Activated CD4-positive, alpha-beta memory T cell treated with anti-CD3 and anti-CD28 coated beads, Interleukin-2, amount 10 ng/mL, durations not matched to agents 7 days and 5 days (primary cell): ENCODE measurements at regions of chr3 and their contacts with region 1.

Region 1: DNA sequence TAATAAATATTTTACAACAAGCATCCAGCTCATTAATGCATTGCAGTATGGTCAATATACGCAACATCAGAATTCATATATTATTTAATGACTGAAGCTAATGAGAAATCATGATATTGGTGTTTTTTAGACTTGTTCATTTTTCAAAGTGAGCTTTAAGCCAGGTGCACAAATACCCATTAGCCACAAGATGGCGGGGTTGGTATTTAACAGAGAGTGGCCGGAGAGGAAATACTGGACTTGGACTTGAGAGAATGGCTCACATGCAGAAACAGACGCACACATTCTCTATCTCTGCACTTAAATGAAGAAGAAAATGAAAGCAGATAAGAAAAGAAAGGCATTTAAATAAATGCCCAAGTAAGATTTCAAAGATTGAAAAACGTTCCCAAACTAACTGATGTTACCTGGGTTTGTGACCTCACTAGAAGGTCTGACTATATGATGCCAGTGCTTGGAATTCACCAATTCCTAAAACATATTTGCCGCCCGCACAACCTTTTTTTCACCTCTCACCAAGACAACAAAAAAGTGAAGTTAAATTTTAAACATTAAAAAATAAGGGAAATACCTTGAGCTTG is 21.2 kb upstream of the CRBN start:
- DNase-seq: peak; percentile 26
- H3K4me3 Mint-ChIP-seq: no peak overlapping the region
- H3K27ac Mint-ChIP-seq: no peak overlapping the region
- H3K4me1 Mint-ChIP-seq: peaks cover 14% of the 10 kb centered on the region
- H3K27me3 Mint-ChIP-seq: peaks cover 5% of the 10 kb centered on the region

Region 2: DNA sequence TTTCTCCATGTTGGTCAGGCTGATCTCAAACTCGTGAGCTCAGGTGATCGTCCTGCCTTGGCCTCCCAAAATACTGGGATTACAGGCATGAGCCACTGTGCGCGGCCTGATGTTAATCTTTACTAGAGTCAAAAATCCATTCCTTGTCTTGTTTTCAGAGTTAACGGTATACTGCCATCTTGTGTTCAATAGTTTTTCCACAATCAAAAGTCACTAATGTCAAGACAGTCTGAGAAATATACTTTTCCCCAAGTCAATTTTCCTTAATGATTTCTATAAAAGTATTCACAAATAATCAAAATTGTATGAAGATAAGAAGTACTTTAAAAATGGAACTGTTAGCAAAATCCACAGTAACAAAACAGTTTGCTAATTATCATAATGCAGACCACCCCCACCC is 29.7 kb before region 1 on chr3:
- CTCF ChIA-PET with region 1: interaction called, 13 read pairs
- POLR2A ChIA-PET with region 1: no interaction called
- DNase-seq: no peak
- H3K4me3 Mint-ChIP-seq: no peak overlapping the region
- H3K27ac Mint-ChIP-seq: peak overlapping the region; percentile 45
- H3K4me1 Mint-ChIP-seq: peaks cover 55% of the 10 kb centered on the region
- H3K27me3 Mint-ChIP-seq: no peaks in the 10 kb centered on the region

Region 3: GRCh38 chr3:3232251-3232650 is 31.5 kb after region 1 on chr3:
- CTCF ChIA-PET with region 1: no interaction called
- POLR2A ChIA-PET with region 1: no interaction called
- DNase-seq: no peak
- H3K4me3 Mint-ChIP-seq: no peak overlapping the region
- H3K27ac Mint-ChIP-seq: no peak overlapping the region
- H3K4me1 Mint-ChIP-seq: no peaks in the 10 kb centered on the region
- H3K27me3 Mint-ChIP-seq: no peaks in the 10 kb centered on the region

Region 4: DNA sequence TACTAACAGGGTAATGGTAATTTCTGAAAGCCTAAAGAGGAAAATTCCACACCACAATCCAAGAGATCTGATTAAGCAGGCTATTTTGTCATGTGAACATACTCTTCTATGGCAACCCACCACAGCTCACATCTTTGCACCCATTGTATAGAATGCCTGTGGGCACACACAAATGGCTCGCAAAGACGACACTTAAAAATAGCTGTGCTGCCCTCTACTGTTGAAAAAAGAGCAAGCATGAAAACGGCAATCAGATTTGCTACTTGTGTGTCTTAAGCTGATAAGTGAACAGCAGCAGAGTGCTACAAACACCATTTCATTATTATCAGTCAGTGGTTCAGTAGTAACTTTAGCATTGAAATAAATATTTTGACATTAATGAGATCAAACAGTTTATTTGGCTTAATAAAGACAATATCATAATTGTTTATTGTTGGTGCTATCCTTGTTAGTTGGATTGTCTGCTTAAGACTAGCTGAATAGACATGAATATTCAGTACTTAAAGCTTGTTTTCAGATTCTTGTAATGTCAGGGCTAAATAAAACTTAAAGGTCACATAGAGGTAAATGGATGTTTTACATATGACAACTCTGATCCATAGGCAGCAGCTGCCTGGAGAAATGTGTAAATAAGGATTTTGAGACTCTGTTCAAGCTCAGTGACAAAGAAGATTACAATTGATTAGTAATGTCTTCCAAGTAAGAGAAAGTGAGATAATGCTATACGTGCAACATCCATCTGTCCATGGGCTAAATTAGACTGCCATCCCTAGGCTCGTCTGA is 797.6 kb after region 1 on chr3:
- CTCF ChIA-PET with region 1: interaction called, 32 read pairs
- POLR2A ChIA-PET with region 1: no interaction called
- DNase-seq: peak; percentile 23
- H3K4me3 Mint-ChIP-seq: no peak overlapping the region
- H3K27ac Mint-ChIP-seq: no peak overlapping the region
- H3K4me1 Mint-ChIP-seq: no peaks in the 10 kb centered on the region
- H3K27me3 Mint-ChIP-seq: peaks cover 3% of the 10 kb centered on the region

Region 5: DNA sequence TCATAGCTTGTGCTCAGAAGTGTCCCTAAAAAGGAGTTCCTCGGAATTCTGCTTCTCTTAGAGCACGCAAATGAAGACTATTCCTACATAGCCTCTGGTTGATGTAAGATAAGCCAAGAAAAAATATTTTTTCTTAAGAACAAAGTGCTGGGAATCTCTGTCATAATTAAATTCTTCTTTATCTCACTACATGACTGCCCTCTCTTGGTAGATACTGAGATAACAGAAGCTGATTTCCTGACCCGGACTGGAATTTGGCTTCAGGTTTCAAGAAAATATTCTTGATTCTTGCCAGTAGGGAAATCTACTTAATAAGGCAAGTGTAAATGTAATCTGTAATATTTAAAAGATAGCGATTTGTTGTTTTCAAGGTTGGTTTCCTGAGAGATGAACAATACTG is 1071.1 kb after region 1 on chr3:
- CTCF ChIA-PET with region 1: interaction called, 10 read pairs
- POLR2A ChIA-PET with region 1: no interaction called
- DNase-seq: no peak
- H3K4me3 Mint-ChIP-seq: no peak overlapping the region
- H3K27ac Mint-ChIP-seq: no peak overlapping the region
- H3K4me1 Mint-ChIP-seq: peaks cover 3% of the 10 kb centered on the region
- H3K27me3 Mint-ChIP-seq: no peaks in the 10 kb centered on the region

Region 6: DNA sequence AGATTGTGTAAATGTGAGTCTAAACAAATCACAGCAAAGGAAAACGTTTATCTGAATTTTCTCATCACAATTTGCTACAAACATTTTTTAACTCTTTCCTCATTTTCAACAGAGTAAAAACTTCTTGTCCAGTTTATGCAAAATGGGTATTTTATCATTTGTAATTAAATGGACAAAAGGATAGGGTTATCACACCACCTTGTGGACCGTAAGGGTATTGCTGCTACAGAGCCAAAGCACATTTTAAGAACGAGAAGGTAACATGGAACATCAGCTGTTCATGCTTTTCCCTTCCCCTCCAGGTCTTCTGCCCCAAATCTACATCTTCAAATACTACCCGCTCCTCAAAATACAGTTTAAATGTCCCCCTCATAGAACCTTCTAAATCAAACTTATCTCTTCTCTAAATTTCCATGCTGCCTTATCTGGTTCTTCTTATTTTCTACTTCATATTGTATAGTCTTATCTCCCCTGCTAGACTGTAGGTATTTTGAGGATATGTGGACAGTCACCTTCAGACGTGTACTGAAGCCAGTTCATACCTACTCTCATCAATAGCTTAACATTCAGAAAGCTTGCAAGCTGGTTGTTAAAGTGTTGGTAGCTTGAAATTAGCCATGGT is 1089.7 kb after region 1 on chr3:
- CTCF ChIA-PET with region 1: interaction called, 18 read pairs
- POLR2A ChIA-PET with region 1: no interaction called
- DNase-seq: no peak
- H3K4me3 Mint-ChIP-seq: no peak overlapping the region
- H3K27ac Mint-ChIP-seq: no peak overlapping the region
- H3K4me1 Mint-ChIP-seq: no peaks in the 10 kb centered on the region
- H3K27me3 Mint-ChIP-seq: peaks cover 12% of the 10 kb centered on the region